Tibial artery (tissue), 4 donors: ENCODE measurements at regions of chrX and their contacts with region 1.

Region 1: GRCh38 chrX:43557792-43558191 is 98.3 kb upstream of the MAOA start:
- DNase-seq: peak in 1 of 2 donors; percentile 38
- H3K4me3 ChIP-seq: no peak overlapping the region
- H3K27ac ChIP-seq: no peak overlapping the region
- H3K4me1 ChIP-seq: no peaks in the 10 kb centered on the region
- H3K27me3 ChIP-seq: no peaks in the 10 kb centered on the region
- CTCF ChIP-seq: peak; percentile 44 to 63

Region 2: DNA sequence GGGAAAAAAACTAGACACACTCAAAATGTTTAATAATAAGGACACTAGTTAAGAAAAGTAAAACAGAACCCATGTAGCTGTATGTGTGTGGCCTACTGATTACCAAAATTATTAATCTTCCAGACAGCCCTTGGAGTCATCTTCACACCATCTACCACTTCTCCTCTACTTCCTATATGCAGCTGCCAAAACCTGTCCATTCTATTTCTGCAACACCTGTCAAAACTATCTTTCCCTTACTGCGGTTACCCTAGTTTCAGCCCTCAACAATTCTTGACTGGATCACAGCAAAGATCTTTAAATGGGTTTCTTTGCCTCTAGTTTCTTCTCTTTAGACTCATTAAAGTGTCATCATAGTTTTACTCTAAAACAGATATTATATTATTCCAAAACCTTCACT is 1761.2 kb before region 1 on chrX:
- intact Hi-C with region 1: loop called (anchors 10 kb)
- DNase-seq: no peak
- H3K4me3 ChIP-seq: no peak overlapping the region
- H3K27ac ChIP-seq: no peak overlapping the region
- H3K4me1 ChIP-seq: peaks cover 0 to 5% (median 0%) of the 10 kb centered on the region in 4 donors
- H3K27me3 ChIP-seq: no peaks in the 10 kb centered on the region
- CTCF ChIP-seq: no peak

Region 3: GRCh38 chrX:43654431-43655150 is 96.8 kb after region 1 on chrX:
- intact Hi-C with region 1: no loop called
- DNase-seq: peak; percentile 94 to 97
- H3K4me3 ChIP-seq: peak overlapping the region; percentile 90 to 93
- H3K27ac ChIP-seq: peak overlapping the region; percentile 84 to 93
- H3K4me1 ChIP-seq: peaks cover 0 to 3% (median 0%) of the 10 kb centered on the region in 4 donors
- H3K27me3 ChIP-seq: no peaks in the 10 kb centered on the region
- CTCF ChIP-seq: peak in 1 of 2 experiments; percentile 20

Region 4: DNA sequence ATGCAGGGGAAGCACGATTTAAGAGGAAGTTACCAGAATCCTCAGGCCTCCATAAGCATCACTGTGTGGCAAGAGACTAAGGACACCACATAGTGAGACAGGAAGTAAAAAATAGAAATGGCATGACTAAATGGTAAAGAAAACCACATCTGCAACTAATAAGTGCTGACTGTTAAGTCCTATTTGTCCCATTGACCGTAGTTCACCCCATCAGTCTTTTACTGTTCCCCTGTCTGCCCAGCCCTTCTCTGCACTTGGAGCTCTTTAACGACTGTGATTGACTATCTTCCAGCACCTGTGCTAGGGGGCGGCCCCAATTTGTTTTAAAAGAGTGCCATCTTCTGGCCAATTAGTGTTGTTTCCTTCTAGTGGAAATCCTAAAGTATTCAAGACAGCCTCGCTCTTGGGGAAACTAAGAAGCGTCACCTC is 192.5 kb after region 1 on chrX:
- intact Hi-C with region 1: loop called (anchors 1 kb)
- DNase-seq: peak; percentile 47 to 67
- H3K4me3 ChIP-seq: no peak overlapping the region
- H3K27ac ChIP-seq: no peak overlapping the region
- H3K4me1 ChIP-seq: peaks cover 0 to 5% (median 0%) of the 10 kb centered on the region in 4 donors
- H3K27me3 ChIP-seq: no peaks in the 10 kb centered on the region
- CTCF ChIP-seq: peak; percentile 41 to 53